GM18951 (cell line): ENCODE measurements at regions of chr11 and their contacts with region 1.

Region 1: DNA sequence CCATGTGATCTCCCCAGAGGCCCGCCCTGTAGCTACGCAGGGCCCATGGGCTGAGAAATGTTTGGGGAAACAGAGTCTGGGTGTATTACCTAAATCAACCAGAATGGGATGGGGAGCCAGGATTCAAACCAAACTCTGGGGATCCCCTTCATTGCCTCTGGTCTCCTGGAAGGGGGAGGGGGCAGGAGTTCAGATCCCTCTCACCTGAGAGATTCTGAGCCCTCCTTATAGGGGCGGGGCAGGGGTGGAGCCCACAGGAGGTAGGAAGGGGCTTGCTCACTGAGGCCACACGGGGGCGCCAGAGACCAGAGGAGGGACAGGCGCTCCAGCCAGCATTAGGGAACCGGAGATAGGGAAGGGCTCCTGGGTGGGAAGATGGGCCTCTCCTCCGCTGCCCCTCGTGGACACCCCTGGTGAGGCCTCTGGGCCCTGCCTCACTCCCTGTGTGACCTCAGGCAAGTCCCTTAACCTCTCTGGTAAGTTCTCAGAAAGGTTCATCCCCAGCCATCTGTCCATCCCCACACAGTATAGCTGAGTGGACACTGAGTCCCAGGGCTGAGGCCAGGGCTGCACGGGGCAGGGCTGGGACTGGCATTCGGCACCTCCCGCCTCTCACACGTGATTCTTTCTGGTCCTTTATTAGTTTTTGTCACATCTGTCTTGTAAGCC is 2.7 kb upstream of the CDC42BPG start:
- POLR2A ChIP-seq: no peak

Region 2: DNA sequence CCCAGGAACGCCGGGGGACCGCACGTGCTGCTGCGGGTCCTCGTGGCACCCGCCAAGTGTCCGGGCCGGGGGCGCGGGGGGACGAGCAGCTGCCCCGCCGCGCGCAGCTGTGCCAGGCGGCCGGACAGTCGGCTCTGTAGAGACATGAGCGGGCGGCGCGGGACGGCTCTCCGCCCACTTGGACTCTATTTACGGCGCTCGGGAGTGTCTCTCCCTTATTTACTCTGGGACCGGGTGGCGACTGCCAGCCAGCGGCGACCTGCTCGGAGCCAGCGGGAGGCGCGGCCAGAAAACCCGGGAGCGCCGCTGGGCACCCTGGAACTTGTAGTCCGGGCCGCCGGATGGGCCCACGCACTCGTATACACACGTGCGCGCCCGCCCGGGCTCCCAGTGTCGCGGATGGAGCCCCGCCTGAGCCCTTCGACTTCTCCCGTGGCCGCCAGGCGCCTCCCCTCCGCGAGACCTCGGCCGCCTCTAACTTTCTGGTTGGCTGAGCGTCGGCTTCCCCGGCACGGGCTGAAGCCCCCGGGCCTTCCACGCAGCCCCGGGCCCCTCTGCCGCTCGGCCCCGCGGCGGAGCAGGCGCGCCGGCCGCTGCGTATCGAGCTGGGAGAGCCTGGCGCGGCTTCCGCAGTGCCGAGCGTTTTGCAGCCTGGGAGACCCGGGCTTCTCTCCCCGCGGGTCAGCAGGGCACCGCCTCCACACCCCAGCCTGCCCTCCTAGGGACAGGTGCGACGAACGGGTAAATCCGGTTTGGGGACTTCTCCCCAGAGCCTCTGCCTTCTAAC is 681.1 kb before region 1 on chr11 and contains the start of gene MACROD1:
- in situ Hi-C with region 1: no loop called
- POLR2A ChIP-seq: peak; percentile 67

Region 3: DNA sequence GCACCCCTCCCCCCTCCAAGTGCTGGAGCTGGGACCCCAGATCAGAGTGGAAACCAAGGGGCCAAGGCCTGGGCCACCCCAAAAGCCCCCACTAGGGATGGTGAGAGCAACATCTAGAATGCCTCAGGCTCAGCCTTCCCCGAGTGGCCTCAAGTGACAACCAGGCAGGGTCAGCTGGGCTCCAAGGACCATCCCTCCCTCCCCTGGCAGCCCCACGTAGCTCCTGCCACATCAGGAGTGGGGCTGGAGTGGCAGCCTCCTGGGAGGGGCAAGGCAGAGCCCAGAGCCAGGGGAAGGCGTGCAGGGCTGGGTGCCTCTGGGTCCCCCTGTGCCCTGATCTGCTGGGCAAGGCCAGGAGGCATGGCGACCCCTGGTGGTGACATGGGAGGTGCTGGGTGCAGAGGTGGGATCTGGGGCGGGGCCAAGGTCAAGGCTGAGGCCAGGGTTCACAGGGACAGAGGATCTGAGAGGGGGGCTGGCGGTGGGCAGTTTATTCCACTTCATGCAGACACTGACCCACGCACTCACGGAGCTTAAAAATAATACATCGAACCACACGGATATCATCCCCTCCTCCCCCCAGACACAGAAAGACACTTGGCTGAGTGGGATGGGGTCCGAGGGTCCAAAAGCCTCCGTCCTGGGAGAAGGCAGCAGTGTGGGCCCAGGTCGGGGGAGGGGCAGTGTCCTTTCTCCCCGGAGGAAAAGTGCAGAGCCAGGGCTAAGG is 47.1 kb after region 1 on chr11:
- in situ Hi-C with region 1: loop called (anchors 5 kb)
- POLR2A ChIP-seq: peak; percentile 32

Region 4: DNA sequence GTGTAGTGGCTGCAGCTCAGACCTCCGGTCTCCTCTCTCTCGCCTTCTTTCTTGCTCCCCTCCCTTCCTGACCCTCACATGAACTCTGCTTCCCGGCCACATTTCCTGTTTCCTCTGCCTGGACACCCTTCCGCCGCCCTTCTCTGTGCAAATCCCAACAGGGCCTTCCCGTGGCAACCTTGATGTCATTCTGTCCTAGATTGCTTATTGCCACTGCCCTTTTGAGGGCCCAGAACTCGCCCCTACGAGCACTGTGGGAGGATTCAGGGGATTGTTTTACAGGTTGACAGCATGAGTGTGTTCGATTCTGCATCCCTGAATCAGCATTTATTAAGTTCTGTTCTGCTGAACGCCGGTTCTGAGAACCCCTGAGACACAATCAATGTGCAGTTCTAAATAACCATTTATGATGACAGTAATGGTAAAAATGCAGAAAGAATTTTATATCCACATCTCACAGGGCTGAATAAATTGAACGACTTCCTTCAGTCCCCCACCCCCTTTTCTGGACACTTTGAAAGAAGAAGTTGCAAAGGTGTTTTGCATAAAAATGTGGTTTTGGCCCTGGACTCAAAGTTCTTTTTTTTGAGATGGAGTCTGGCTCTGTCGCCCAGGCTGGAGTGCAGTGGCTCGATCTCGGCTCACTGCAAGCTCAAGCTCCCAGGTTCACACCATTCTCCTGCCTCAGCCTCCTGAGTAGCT is 143.2 kb after region 1 on chr11:
- in situ Hi-C with region 1: no loop called
- POLR2A ChIP-seq: no peak

Region 5: GRCh38 chr11:65477149-65477965 is 630.2 kb after region 1 on chr11:
- in situ Hi-C with region 1: no loop called
- POLR2A ChIP-seq: peak; percentile 90